MCF 10A (cell line): ENCODE measurements at regions of chr3 and their contacts with region 1.

Region 1: GRCh38 chr3:8416965-8417364 is 84.7 kb upstream of the LMCD1 start:
- DNase-seq: peak; percentile 62
- H3K4me3 Mint-ChIP-seq: peak overlapping the region; percentile 47
- H3K27ac Mint-ChIP-seq: no peak overlapping the region
- H3K4me1 Mint-ChIP-seq: peaks cover 9% of the 10 kb centered on the region
- H3K27me3 Mint-ChIP-seq: peaks cover 6% of the 10 kb centered on the region
- CTCF ChIP-seq: no peak

Region 2: GRCh38 chr3:8405144-8405543 is 11.8 kb before region 1 on chr3:
- CTCF ChIA-PET with region 1: interaction called, 12 read pairs
- POLR2A ChIA-PET with region 1: no interaction called
- intact Hi-C with region 1: no loop called
- DNase-seq: no peak
- H3K4me3 Mint-ChIP-seq: no peak overlapping the region
- H3K27ac Mint-ChIP-seq: no peak overlapping the region
- H3K4me1 Mint-ChIP-seq: no peaks in the 10 kb centered on the region
- H3K27me3 Mint-ChIP-seq: no peaks in the 10 kb centered on the region
- CTCF ChIP-seq: no peak

Region 3: GRCh38 chr3:8436718-8437184 is 19.8 kb after region 1 on chr3:
- CTCF ChIA-PET with region 1: interaction called, 11 read pairs
- POLR2A ChIA-PET with region 1: no interaction called
- intact Hi-C with region 1: no loop called
- DNase-seq: no peak
- H3K4me3 Mint-ChIP-seq: no peak overlapping the region
- H3K27ac Mint-ChIP-seq: no peak overlapping the region
- H3K4me1 Mint-ChIP-seq: no peaks in the 10 kb centered on the region
- H3K27me3 Mint-ChIP-seq: peaks cover 11% of the 10 kb centered on the region
- CTCF ChIP-seq: no peak